ENCODE measurements at regions of chr3 and their contacts with region 1.

Region 1: GRCh38 chr3:88101142-88101541 is 42.1 kb downstream of the ZNF654 start:
- DNase-seq: no peak
- CTCF ChIP-seq: no peak

Region 2: GRCh38 chr3:88123526-88123925 is 22.4 kb after region 1 on chr3:
- CTCF ChIA-PET with region 1: interaction called, 12 read pairs
- POLR2A ChIA-PET with region 1: no interaction called
- DNase-seq: no peak
- CTCF ChIP-seq: no peak